ENCODE measurements at regions of chr6 and their contacts with region 1.

Region 1: GRCh38 chr6:44237813-44238433 is 9.0 kb upstream of the HSP90AB1 start:
- DNase-seq: peak; percentile 90 to 95
- ATAC-seq: peak; percentile 94
- H3K4me3 ChIP-seq: peak overlapping the region; percentile 21 to 35
- H3K27ac ChIP-seq: peak overlapping the region; percentile 84 to 95
- H3K4me1 ChIP-seq: no peaks in the 10 kb centered on the region
- H3K27me3 ChIP-seq: no peaks in the 10 kb centered on the region

Region 2: DNA sequence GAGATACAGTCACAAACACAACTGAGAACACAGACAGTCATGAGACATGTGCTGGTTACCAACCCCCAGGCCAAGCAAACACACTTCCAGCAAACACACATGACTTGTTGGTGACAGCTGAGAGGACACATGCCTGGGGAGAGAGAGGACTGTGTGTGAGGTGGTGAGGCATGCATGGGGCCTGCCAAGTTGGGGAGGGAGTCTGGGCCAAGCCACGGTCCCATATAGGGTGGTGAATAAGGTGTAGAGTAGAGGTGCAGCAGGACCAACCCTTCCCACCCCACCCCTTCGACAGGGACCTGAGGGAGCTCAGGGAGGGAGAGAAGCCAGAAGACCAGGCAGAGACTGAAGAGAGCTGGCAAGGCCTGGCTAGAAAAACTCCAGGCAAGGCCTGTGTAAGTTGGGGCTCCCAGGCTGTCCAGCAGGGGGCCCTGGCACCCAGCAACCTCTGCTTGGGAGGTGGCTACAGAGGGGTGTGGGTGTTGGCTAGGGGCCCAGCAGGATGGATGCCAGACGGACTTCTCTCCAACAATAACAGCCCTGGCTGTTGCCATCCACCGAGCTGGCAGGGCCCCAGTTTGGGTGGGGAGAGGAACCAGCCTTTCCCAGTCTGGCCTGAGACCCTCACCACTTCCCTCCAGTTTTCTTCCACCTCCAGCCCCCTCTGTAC is 16.5 kb before region 1 on chr6:
- intact Hi-C with region 1: loop called in 1 of 2 experiments (anchors 1 kb)
- DNase-seq: peak; percentile 96 to 97
- ATAC-seq: peak; percentile 83
- H3K4me3 ChIP-seq: no peak overlapping the region
- H3K27ac ChIP-seq: peak overlapping the region; percentile 51 to 84
- H3K4me1 ChIP-seq: no peaks in the 10 kb centered on the region
- H3K27me3 ChIP-seq: no peaks in the 10 kb centered on the region